Activated CD4-positive, alpha-beta memory T cell treated with anti-CD3 and anti-CD28 coated beads for 36 hours (primary cell): ENCODE measurements at regions of chr1 and their contacts with region 1.

Region 1: GRCh38 chr1:181397845-181398244 is 85.5 kb upstream of the CACNA1E start:
- DNase-seq: peak; percentile 39
- H3K4me3 Mint-ChIP-seq: no peak overlapping the region
- H3K27ac Mint-ChIP-seq: peak overlapping the region; percentile 53
- H3K4me1 Mint-ChIP-seq: peaks cover 38% of the 10 kb centered on the region
- H3K27me3 Mint-ChIP-seq: no peaks in the 10 kb centered on the region

Region 2: DNA sequence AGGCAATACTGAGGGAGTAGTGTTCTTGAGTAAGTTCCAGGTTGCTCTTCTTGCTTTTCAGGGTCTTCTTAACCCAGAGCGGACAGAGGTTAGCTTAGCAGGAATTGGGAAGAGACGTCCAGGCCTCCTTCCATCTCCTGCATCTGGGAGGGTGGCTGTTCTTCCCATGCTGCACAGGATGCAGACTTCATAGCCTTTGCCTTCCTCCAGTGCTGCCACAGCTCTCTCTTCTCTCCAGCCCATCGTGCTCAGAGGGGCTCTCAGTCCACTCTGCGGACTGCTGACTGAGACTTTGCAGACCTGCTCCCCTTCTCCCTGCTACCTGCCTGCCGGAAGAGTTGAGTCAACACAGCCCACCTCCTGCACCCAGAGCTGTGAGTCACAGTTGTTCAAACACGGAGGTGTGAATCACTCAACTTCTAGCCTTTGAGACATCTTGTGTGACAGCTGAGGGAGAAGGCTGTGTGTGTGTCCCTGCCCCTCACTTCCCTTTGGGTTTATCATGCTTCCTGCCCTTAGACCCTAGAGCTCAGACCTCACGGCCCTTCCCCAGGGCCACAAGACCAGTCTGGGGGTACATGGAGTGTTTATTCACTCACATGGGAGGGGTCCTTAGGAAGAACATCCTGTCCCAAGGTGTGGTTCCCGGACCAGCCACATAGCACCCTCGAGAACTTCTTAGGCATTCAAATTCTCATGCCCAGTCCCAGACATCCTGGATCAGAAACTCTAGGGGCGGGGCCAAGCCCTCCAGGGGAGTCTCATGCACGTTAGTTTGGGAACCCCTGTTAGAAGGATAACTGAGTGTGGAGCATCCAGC is 72.8 kb before region 1 on chr1:
- CTCF ChIA-PET with region 1: no interaction called
- POLR2A ChIA-PET with region 1: no interaction called
- intact Hi-C with region 1: loop called (anchors 2 kb)
- DNase-seq: peak; percentile 75
- H3K4me3 Mint-ChIP-seq: no peak overlapping the region
- H3K27ac Mint-ChIP-seq: no peak overlapping the region
- H3K4me1 Mint-ChIP-seq: peaks cover 9% of the 10 kb centered on the region
- H3K27me3 Mint-ChIP-seq: peaks cover 5% of the 10 kb centered on the region

Region 3: DNA sequence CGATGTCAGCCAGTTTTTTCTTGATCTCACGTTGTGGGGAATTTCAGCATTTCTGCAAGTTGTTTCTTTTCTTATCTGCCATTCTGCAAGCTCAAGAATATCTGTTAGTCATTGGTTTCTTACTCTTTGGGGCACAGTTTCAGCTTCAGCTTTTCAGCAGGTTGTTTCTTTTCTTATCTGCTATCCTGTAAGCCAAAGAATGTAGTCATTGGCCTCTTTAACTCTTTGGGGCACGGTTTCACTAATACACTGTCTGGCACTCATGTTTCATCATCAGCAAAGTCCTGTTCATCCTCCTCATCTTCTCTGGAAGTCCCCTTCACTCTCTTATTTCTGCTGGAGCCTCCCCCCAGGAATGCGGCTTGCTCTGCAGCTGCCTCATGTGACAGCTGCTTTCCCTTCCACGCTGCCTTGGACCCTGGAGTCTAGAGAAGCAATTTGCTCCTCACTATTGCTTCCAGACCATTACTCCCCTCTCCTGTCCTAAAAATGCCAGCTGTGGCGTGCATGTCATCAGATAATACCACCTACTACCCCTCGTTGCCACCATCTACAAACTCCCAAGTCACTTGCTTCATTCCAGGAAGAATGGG is 18.5 kb after region 1 on chr1:
- CTCF ChIA-PET with region 1: no interaction called
- POLR2A ChIA-PET with region 1: no interaction called
- intact Hi-C with region 1: loop called (anchors 1 kb)
- DNase-seq: no peak
- H3K4me3 Mint-ChIP-seq: no peak overlapping the region
- H3K27ac Mint-ChIP-seq: no peak overlapping the region
- H3K4me1 Mint-ChIP-seq: no peaks in the 10 kb centered on the region
- H3K27me3 Mint-ChIP-seq: no peaks in the 10 kb centered on the region

Region 4: DNA sequence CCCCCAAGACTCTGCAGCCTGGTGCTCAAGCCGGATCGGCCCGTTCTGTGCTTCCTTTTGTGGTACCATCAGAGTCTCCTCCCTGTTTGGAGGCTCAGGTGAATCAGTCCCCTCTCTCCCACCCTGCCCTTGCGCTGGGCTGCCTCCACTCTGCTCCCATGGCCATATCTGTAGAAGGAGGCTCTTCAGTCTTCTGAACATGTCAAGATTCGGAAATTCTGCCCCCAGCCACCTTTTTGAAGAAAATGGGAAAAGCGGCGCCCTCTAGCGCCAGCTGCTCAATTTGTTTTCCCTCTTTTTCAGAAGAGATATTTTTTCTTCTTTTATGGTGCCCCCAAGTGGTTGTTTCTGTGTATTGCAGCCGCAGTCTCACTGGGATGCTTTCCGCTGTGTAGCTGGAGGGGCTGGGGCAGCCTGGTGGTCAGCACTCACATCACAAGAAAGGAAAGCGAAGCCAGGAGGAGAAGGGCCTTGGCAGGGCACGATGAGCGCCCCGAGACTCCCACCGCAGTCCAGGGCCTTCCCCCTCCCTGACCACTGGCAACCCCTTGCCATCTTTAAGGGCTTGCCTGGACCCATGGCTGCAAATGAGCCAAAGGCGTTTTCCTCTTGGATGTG is 27.1 kb after region 1 on chr1:
- CTCF ChIA-PET with region 1: interaction called, 11 read pairs
- POLR2A ChIA-PET with region 1: no interaction called
- intact Hi-C with region 1: loop called (anchors 2 kb)
- DNase-seq: peak; percentile 84
- H3K4me3 Mint-ChIP-seq: peak overlapping the region; percentile 41
- H3K27ac Mint-ChIP-seq: no peak overlapping the region
- H3K4me1 Mint-ChIP-seq: peaks cover 12% of the 10 kb centered on the region
- H3K27me3 Mint-ChIP-seq: peaks cover 8% of the 10 kb centered on the region